AG04449 (cell line): ENCODE measurements at regions of chr16 and their contacts with region 1.

Region 1: DNA sequence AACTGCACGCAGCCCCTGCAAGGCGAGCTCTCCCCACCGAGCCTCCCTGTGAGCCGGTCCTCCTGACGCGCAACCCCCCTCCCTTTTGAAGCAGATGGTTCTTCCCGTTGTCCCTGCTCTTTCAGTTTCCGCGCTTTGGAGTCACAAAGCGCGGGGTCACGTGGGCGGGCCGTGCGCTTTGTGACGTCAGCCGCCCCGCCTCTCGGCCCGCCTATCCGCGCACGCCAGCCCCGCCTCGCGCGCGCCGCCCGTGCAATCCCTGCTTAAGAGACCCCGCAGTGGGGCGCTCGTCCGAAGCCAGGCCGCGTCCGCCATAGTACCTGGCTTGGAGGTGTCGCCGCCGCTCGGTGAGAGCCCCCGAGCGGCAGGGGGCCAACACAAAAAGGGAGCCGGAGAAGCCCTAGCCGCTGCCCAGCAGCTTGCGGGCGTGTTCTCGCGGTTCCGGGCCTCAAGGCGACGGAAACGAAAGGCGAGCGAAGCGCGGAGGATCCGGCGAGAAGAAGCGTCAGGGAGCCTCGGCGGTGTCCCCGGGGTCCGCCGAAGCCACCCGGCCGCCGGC is at the start of gene RBBP6:
- DNase-seq: peak; percentile 78
- H3K4me3 ChIP-seq: peak within 1 kb of the TSS; percentile 89
- CTCF ChIP-seq: peak; percentile 68

Region 2: GRCh38 chr16:24478401-24478800 is 61.0 kb before region 1 on chr16:
- CTCF ChIA-PET with region 1: no interaction called
- POLR2A ChIA-PET with region 1: no interaction called
- DNase-seq: no peak
- H3K4me3 ChIP-seq: no peak overlapping the region
- CTCF ChIP-seq: no peak

Region 3: GRCh38 chr16:24516900-24517669 is 22.3 kb before region 1 on chr16:
- CTCF ChIA-PET with region 1: interaction called, 19 read pairs
- POLR2A ChIA-PET with region 1: interaction called, 3 read pairs
- DNase-seq: peak; percentile 31
- H3K4me3 ChIP-seq: no peak overlapping the region
- CTCF ChIP-seq: peak; percentile 86

Region 4: GRCh38 chr16:24525970-24526559 is 13.3 kb before region 1 on chr16:
- CTCF ChIA-PET with region 1: interaction called, 14 read pairs
- POLR2A ChIA-PET with region 1: interaction called, 3 read pairs
- DNase-seq: no peak
- H3K4me3 ChIP-seq: no peak overlapping the region
- CTCF ChIP-seq: no peak